A549 (cell line): ENCODE measurements at regions of chr12 and their contacts with region 1.

Region 1: DNA sequence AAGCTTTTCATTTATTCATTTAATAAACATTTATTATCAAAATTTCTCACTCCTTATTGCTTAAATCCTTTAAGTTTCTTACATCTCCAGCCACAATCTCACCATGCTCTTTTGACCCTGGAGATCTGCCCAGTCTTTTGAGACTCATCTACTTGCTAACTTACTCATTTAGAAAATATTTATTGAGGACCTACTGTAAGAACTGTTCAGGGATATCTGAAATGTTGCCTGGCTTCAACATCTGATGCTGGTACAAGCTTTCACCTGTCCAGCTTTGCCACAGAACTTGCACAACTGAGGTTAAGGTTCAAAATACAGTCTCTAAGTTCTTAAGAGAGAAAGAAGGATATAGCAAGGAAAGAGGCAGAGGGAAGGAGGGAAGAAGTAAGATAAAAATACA is 17.5 kb upstream of the GXYLT1 start:
- DNase-seq: peak in 1 of 2 experiments; percentile 56
- ATAC-seq: peak; percentile 62 to 77; a peak in 5 of 6 replicates
- H3K4me3 ChIP-seq: no peak overlapping the region
- H3K27ac ChIP-seq: peak overlapping the region; percentile 67 to 81
- H3K4me1 ChIP-seq: peaks cover 75% of the 10 kb centered on the region
- CTCF ChIP-seq: no peak
- EP300 ChIP-seq: no peak
- POLR2A ChIP-seq: no peak
- RAD21 ChIP-seq: peak in 1 of 2 experiments; percentile 9; a peak in 1 of 5 replicates

Region 2: DNA sequence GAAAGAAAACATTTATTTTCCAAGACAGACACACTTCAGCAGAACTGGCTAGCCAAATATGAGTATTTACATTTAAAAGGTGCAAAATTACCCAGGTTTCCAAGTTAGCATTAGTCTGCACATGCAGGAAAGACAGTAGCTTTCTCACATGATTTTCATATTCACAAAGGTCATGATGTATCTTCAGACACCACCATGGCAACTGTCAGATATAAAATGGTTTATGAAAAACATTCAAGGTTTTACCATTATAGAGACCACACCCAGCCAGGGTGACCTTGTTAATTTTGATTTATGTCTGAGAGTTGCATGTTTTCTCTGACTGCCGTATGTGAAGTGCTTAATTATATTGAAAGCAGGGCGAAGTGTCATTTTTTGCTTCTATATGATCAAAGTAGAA is 108.7 kb before region 1 on chr12:
- CTCF ChIA-PET with region 1: no interaction called
- POLR2A ChIA-PET with region 1: no interaction called
- DNase-seq: no peak
- ATAC-seq: no peak
- H3K4me3 ChIP-seq: no peak overlapping the region
- H3K27ac ChIP-seq: no peak overlapping the region
- H3K4me1 ChIP-seq: no peaks in the 10 kb centered on the region
- CTCF ChIP-seq: no peak
- EP300 ChIP-seq: no peak
- POLR2A ChIP-seq: no peak
- RAD21 ChIP-seq: no peak

Region 3: DNA sequence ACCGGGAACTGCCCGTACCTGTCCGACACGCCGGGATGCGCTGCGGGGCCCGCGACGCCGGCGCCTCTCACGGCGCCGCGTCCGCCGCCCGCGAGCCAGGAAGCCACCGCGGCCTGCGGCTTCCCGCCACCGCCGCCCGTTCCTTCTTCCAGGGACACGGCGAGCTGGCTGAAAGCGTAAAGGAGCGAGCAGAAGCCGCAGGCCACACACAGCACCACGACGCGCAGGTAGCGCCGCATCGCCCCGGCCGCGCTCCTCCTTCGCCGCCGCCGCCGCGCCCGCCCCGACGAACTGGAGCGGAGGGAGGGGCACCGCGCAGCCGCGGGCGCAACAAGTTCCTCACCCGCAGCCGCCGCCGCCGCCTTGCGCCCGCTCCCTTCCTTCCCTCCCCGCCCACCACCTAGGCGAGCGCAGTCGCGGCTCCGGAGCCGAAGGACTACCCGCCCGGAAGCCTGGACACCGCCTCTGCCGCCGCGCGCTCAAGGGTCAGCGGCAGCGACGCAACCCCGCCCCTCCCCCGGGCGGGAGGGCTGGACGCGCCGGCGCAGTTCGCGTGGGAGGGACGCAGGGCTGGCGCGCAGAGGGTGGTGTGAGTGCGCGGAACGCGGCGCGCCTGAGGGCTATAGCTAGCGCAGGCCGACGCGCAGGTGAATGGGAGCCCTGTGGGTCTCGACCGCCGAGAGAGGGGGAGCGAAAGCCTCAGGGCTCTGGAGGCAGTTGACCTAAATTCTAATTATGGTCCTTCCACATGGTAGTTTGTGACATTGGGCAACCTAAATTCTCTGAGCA is 17.6 kb before region 1 on chr12 and contains the start of gene GXYLT1:
- CTCF ChIA-PET with region 1: interaction called, 10 read pairs
- POLR2A ChIA-PET with region 1: interaction called, 4 read pairs
- DNase-seq: peak; percentile 78 to 96
- ATAC-seq: peak; percentile 92 to 94
- H3K4me3 ChIP-seq: peak within 1 kb of the TSS; percentile 82
- H3K27ac ChIP-seq: peak within 1 kb of the TSS; percentile 95 to 96
- H3K4me1 ChIP-seq: peaks cover 49% of the 10 kb centered on the region
- CTCF ChIP-seq: no peak
- EP300 ChIP-seq: no peak
- POLR2A ChIP-seq: peak; percentile 82
- RAD21 ChIP-seq: peak in 1 of 2 experiments; percentile 17; a peak in 1 of 5 replicates
- polyA plus RNA-seq, gene GXYLT1: 19.3 and 25.0 TPM in 2 replicates